Activated CD8-positive, alpha-beta T cell treated with anti-CD3 and anti-CD28 coated beads, Interleukin-2, amount 10 ng/mL, durations not matched to agents 7 days and 5 days (primary cell): ENCODE measurements at regions of chr12 and their contacts with region 1.

Region 1: GRCh38 chr12:6944381-6945186 is 762 bp downstream of the C12orf57 start:
- DNase-seq: peak; percentile 93
- ATAC-seq: peak; percentile 52
- H3K4me3 Mint-ChIP-seq: peak overlapping the region; percentile 88
- H3K27ac Mint-ChIP-seq: peak overlapping the region; percentile 97
- H3K4me1 Mint-ChIP-seq: peaks cover 75% of the 10 kb centered on the region
- H3K27me3 Mint-ChIP-seq: peaks cover 2% of the 10 kb centered on the region

Region 2: GRCh38 chr12:6867413-6868210 is 77.0 kb before region 1 on chr12 and contains the start of gene TPI1:
- CTCF ChIA-PET with region 1: interaction called, 37 read pairs
- POLR2A ChIA-PET with region 1: interaction called, 41 read pairs
- DNase-seq: peak; percentile 85
- ATAC-seq: peak; percentile 70
- H3K4me3 Mint-ChIP-seq: peak within 1 kb of the TSS; percentile 98
- H3K27ac Mint-ChIP-seq: peak within 1 kb of the TSS; percentile 96
- H3K4me1 Mint-ChIP-seq: peaks cover 58% of the 10 kb centered on the region
- H3K27me3 Mint-ChIP-seq: no peaks in the 10 kb centered on the region
- total RNA-seq, gene TPI1: 1,505 to 1,545 TPM

Region 3: DNA sequence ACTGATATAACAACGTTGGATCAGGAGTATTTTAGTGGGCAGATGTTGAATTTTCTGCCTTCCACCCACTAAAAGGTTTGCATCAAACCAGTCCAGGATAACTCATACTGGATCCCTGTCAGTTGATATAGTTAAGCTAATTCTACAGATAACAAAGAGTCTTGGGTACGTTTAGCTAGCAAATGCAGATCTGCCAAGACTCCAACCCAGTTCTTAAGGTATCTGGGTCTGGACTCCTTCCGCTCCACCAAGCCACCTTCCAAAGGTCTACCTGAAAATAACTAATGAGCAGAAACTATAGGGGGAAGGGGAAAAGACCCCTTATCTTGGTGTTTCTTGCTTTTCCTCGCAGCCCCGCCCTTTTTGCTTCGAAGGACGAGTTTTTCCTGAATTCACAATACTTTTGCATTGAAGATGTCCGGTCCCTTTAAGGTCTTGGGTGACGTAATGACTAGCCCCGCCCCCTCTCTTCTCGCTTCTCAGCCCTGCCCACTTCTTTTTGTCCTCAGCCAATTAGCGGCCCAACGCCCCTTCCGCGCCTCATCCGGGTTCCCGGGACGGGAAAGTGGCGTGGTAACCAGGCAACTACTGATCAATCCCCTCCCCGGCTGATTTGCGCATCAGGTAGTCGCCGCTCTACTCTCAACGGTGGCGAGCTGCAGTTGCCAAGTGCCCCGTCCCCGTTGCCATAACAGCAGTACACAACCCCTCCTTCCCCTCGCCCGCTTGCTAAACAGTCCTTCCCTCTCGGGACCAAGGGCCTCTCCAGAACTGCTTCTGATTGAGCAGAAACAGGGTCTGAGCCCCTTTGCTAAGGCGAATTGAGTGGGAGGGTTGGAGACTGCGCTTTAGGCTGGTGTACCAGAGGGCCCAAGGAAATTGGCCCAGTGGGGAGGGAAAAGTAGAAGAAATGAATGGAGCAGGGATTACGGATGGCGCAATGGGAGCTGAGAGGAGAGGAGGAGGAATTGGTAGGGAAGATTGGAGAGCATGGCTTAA is 40.0 kb before region 1 on chr12 and contains the start of gene LRRC23:
- CTCF ChIA-PET with region 1: interaction called, 4 read pairs
- POLR2A ChIA-PET with region 1: interaction called, 16 read pairs
- DNase-seq: peak; percentile 99
- ATAC-seq: peak; percentile 95
- H3K4me3 Mint-ChIP-seq: no peak within 1 kb of the TSS
- H3K27ac Mint-ChIP-seq: no peak within 1 kb of the TSS
- H3K4me1 Mint-ChIP-seq: peaks cover 11% of the 10 kb centered on the region
- H3K27me3 Mint-ChIP-seq: no peaks in the 10 kb centered on the region
- total RNA-seq, gene LRRC23: 6.5 to 8.6 TPM

Region 4: DNA sequence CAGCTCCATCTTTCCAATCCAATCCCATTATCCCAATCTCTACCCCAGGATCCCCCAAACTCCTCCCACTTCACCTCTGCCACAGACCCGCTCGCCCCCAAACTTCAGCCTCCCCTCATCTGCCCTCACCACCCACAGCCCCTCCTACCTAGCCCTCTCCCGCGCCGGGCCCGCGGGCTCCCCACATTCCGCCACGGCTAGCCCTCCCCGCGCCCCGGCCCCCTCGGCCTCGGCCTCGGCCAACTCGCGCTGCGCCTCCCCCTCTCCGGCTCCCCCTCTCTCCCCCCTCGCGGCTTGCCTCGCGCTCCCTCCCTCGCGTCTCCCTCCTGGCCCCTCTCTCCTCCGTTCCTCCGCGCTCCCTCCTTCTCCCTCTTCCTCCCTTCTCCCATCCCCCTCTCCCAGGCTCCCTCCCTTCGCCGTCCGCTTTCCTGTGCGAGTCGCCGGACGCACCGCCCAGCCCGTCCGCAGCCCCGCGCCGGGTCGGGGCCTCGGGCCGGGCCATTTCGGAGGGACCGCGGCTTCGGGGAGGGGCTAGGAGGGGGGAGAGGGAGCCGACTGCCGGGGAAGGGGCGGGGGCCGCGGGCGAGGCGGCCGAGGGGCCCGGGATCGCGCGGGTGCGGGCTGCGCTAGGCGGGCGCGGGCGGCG is 17.1 kb before region 1 on chr12 and contains the start of gene ATN1:
- CTCF ChIA-PET with region 1: interaction called, 106 read pairs
- POLR2A ChIA-PET with region 1: interaction called, 94 read pairs
- DNase-seq: peak; percentile 51
- ATAC-seq: peak; percentile 34
- H3K4me3 Mint-ChIP-seq: peak within 1 kb of the TSS; percentile 78
- H3K27ac Mint-ChIP-seq: peak within 1 kb of the TSS; percentile 53
- H3K4me1 Mint-ChIP-seq: peaks cover 68% of the 10 kb centered on the region
- H3K27me3 Mint-ChIP-seq: no peaks in the 10 kb centered on the region
- total RNA-seq, gene ATN1: 21.6 to 24.5 TPM

Region 5: GRCh38 chr12:7018350-7019042 is 73.9 kb after region 1 on chr12 and contains the start of gene LPCAT3:
- CTCF ChIA-PET with region 1: interaction called, 20 read pairs
- POLR2A ChIA-PET with region 1: interaction called, 21 read pairs
- DNase-seq: peak; percentile 98
- ATAC-seq: peak; percentile 97
- H3K4me3 Mint-ChIP-seq: peak within 1 kb of the TSS; percentile 95
- H3K27ac Mint-ChIP-seq: peak within 1 kb of the TSS; percentile 86
- H3K4me1 Mint-ChIP-seq: peaks cover 28% of the 10 kb centered on the region
- H3K27me3 Mint-ChIP-seq: no peaks in the 10 kb centered on the region
- total RNA-seq, gene LPCAT3: 37.3 to 40.3 TPM

Region 6: DNA sequence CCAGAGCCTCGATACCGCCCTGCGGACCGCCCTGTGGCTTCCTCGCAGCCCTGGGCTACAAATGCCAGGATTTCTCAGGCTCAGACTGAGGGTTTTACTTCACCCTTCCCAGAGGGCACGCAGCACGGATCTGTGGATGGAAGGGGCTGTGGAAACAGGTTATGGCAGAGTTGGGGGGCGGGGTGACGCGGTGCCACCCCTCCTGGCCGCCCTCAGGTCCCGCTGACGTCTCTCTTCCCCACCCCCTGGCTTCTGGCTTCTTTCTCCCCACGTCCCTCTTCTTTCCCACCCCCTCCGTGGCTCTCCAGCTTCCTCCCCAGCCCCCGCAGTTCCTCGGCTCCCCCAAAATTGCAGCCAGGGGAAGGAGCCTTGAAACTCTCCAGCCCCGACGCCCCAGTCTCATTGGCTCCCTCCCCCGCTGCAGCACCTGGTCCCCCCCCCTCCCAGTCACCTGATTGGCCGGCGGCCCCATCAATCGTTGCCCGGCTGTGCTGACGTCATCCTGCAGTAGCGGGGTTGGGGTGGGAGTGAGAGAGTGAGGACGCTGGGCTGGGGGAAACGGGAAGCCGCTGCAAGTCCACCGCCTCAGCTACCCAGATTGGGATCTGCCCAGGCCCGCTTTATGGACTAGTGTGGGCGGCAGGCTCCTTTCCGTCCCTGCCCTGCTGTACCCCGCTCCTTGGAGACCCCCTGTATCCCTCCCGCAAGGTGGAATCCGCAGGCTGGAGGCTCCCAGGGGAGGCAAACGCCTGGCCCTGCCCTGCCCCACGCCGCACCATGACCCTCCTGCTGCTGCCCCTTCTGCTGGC is 185.5 kb after region 1 on chr12 and contains the start of gene CLSTN3:
- CTCF ChIA-PET with region 1: interaction called, 4 read pairs
- POLR2A ChIA-PET with region 1: interaction called, 12 read pairs
- DNase-seq: peak; percentile 90
- ATAC-seq: peak; percentile 86
- H3K4me3 Mint-ChIP-seq: peak within 1 kb of the TSS; percentile 92
- H3K27ac Mint-ChIP-seq: peak within 1 kb of the TSS; percentile 87
- H3K4me1 Mint-ChIP-seq: peaks cover 34% of the 10 kb centered on the region
- H3K27me3 Mint-ChIP-seq: no peaks in the 10 kb centered on the region
- total RNA-seq, gene CLSTN3: 76.8 to 83.9 TPM